ENCODE measurements at regions of chr7 and their contacts with region 1.

Region 1: GRCh38 chr7:117750612-117751563 is 122.4 kb downstream of the CTTNBP2 start:
- DNase-seq: no peak

Region 2: GRCh38 chr7:117873310-117874190 is 122.7 kb after region 1 on chr7 and contains the start of gene CTTNBP2:
- intact Hi-C with region 1: loop called (anchors 1 kb)
- DNase-seq: peak; percentile 50 to 96 (median 76)

Region 3: GRCh38 chr7:118104812-118105441 is 354.0 kb after region 1 on chr7:
- intact Hi-C with region 1: loop called (anchors 5 kb)
- DNase-seq: no peak

Region 4: DNA sequence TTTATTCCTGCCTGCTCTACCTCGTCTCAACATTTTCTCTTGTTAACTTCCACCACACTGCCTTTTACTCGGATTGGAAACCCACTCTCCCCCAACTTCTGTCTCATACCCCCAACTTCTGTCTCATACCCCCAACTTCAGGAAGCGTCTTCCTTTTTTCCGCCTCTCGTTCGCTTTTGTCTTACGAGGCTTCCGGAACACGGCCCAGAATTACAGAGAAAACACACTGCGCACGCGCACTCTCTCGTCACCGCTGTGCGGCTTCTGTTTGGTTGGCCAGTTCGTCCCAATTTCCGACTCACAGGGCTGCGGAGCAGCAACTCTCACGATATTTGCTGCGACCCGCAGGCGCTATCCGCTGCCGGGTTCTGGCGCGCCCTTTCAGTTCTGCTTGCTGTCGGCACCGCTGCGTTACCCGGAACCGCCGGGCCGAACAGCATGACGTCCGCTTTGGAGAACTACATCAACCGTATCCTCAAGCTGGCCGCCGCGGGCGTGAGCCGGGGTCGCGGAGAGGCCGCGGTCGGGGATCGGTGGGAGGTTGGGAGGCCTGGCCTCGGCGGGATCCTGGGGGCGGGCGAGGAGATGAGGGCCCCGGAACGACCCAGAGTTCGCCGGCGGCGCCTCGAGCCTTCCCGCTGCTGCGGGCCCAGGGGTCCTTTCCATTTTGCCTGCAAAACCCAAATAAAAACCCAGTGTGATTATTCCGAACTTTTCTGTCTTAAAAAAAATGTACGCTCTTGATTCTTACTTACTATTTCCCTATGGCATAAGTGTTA is 433.1 kb after region 1 on chr7 and contains the start of gene LSM8:
- intact Hi-C with region 1: loop called (anchors 10 kb)
- DNase-seq: peak; percentile 92 to 99 (median 94)